ENCODE measurements at regions of chr7 and their contacts with region 1.

Region 1: DNA sequence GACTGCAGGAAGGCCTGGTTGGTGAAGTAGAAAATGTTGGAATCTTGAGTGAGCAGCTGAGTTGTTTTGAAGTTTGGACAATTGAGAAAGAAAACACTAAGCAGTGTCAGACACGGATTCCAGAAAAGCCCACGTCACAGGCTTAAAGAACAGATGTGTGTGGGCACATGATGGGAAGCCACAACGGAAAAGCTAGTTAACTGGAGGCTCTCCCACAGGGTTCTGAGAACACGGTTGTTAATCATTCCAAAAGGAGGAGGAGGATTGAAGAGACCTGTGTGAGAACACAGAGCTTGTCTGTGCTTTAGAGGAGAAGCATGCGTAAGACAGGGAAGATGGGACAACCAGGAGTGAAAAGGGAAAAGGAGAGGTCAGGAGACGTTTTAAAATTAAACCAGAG is 42.6 kb downstream of the SHH start:
- DNase-seq: no peak
- ATAC-seq: no peak
- H3K4me3 ChIP-seq: no peak overlapping the region
- H3K4me3 Mint-ChIP-seq: no peak overlapping the region
- H3K27ac ChIP-seq: no peak overlapping the region
- H3K27ac Mint-ChIP-seq: no peak overlapping the region
- H3K4me1 ChIP-seq: peaks cover 0 to 2% of the 10 kb centered on the region in 2 donors
- H3K4me1 Mint-ChIP-seq: peaks cover 3% of the 10 kb centered on the region
- H3K27me3 ChIP-seq: no peaks in the 10 kb centered on the region
- H3K27me3 Mint-ChIP-seq: no peaks in the 10 kb centered on the region
- CTCF ChIP-seq: no peak

Region 2: GRCh38 chr7:155263332-155264143 is 506.2 kb before region 1 on chr7:
- CTCF ChIA-PET with region 1: no interaction called
- POLR2A ChIA-PET with region 1: no interaction called
- intact Hi-C with region 1: no loop called
- DNase-seq: no peak
- ATAC-seq: no peak
- H3K4me3 ChIP-seq: no peak overlapping the region
- H3K4me3 Mint-ChIP-seq: no peak overlapping the region
- H3K27ac ChIP-seq: no peak overlapping the region
- H3K27ac Mint-ChIP-seq: no peak overlapping the region
- H3K4me1 ChIP-seq: no peaks in the 10 kb centered on the region
- H3K4me1 Mint-ChIP-seq: no peaks in the 10 kb centered on the region
- H3K27me3 ChIP-seq: no peaks in the 10 kb centered on the region
- H3K27me3 Mint-ChIP-seq: peaks cover 11% of the 10 kb centered on the region
- CTCF ChIP-seq: no peak

Region 3: DNA sequence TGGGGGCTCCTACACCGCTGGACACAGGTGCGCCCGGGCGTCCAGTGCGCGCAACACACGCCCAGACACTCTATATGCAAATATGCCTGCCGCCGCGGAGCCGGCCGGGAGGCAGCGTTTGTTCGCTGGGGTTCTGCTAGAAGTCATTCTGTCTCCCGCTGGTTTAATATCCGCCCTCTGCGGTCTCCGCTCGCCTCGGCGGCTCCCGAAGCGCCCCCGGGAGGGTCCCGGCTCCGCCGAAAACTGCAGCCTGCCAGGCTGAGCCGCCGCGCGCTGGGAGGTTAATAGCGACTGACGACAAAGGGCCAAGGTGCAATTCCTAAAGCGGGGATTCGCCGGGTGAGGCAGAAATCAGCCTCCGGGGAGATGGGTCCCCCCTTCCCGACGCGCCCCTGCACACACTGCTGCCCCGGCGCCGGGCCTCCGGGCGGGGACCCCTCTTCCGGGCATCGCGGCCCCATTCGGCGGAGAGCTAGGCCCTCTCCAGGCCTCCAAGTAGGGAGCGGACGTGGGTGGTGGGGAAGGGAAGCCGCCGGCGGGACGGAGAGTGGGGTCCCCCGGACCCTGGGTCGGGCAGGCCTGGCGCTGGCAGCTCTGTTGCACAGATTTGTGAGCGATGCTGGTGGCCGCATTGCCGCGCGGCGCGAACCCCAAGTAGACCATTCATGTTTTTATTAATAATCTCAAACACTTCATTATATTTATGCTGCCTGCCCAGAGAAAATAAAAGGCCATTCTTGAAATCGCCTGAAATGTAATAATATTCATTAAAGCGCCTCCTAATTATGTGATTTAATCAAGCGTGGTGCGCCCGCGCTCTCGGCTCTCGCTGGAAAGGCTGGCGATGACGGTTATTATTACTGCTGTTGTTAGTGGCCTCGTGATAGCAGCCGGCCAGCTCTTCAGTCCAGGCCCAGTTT is 302.6 kb before region 1 on chr7:
- CTCF ChIA-PET with region 1: no interaction called
- POLR2A ChIA-PET with region 1: no interaction called
- intact Hi-C with region 1: loop called (anchors 5 kb)
- DNase-seq: peak; percentile 59
- ATAC-seq: no peak
- H3K4me3 ChIP-seq: peak overlapping the region in 3 of 5 experiments; percentile 9 to 45 (median 30)
- H3K4me3 Mint-ChIP-seq: peak overlapping the region; percentile 64
- H3K27ac ChIP-seq: no peak overlapping the region
- H3K27ac Mint-ChIP-seq: no peak overlapping the region
- H3K4me1 ChIP-seq: peaks cover 39 to 59% of the 10 kb centered on the region in 2 donors
- H3K4me1 Mint-ChIP-seq: peaks cover 21% of the 10 kb centered on the region
- H3K27me3 ChIP-seq: peaks cover 0 to 96% (median 85%) of the 10 kb centered on the region in 4 experiments
- H3K27me3 Mint-ChIP-seq: peaks cover 78% of the 10 kb centered on the region
- CTCF ChIP-seq: no peak

Region 4: DNA sequence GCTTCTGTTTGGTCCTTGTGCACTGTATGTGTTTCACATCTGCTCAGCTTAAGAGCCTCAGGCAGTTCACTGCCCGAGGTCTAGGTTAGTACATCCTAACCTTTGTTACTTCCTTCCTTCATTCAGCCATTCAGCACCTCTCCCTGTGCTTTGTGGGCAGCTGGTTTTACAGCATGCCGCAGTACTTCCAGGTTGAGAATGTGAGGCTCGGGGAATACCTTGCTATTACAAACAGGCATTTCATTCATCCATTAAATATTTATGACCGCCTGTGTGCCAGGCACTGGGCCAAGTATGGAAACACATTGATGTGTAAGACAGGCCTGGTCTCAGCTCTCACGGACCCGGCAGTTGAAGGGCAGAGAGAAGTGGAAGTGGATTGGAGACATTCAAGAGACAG is 39.9 kb before region 1 on chr7:
- CTCF ChIA-PET with region 1: interaction called, 11 read pairs
- POLR2A ChIA-PET with region 1: no interaction called
- intact Hi-C with region 1: no loop called
- DNase-seq: no peak
- ATAC-seq: no peak
- H3K4me3 ChIP-seq: no peak overlapping the region
- H3K4me3 Mint-ChIP-seq: no peak overlapping the region
- H3K27ac ChIP-seq: peak overlapping the region in 1 of 2 donors; percentile 76
- H3K27ac Mint-ChIP-seq: peak overlapping the region; percentile 43
- H3K4me1 ChIP-seq: peaks cover 41 to 53% of the 10 kb centered on the region in 2 donors
- H3K4me1 Mint-ChIP-seq: peaks cover 80% of the 10 kb centered on the region
- H3K27me3 ChIP-seq: no peaks in the 10 kb centered on the region
- H3K27me3 Mint-ChIP-seq: no peaks in the 10 kb centered on the region
- CTCF ChIP-seq: no peak

Region 5: DNA sequence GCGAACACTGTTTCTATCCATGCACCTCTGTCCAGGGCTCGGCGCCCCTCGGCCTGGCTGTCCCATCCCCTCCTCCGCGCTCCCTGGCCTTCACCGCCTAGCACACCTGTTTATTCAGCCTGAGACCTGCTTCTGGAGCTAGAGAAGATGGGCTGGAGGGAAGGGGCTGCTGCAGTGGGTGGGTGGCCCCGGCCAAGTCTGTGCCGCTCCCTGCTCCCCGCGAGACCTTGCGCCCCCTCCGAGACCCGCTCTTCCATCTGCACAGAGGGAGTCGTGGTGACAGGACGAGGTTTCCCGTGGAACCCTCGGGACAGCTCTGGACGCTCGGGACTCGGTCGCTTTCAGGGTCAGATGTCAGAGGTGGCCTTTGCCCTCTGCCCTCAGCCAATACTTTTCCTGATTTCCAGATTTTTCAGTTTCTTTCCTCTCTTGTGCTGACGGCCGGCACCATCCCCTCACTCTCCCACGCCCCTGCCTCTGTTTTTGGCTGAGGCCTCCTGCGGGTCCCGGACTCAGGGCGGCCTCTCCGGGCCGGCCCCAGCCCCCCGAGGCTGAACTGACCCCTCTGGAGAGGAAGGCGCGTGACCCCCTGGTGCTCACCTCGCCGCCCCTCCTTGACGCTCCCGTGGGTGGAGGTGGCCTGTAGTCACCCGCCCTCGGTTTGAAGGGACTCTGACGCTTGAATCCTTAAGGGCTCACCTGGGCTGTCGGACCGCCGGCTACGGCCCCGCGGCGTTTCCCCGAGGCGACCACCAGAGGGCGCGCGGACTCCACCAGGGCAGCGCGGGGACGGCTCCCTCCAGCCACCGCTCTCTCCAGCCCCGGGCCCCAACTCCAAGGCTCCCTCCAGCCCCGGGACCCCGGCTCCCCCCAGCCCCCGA is 26.9 kb after region 1 on chr7:
- CTCF ChIA-PET with region 1: no interaction called
- POLR2A ChIA-PET with region 1: no interaction called
- intact Hi-C with region 1: no loop called
- DNase-seq: peak; percentile 72
- ATAC-seq: peak; percentile 91
- H3K4me3 ChIP-seq: no peak overlapping the region
- H3K4me3 Mint-ChIP-seq: no peak overlapping the region
- H3K27ac ChIP-seq: no peak overlapping the region
- H3K27ac Mint-ChIP-seq: no peak overlapping the region
- H3K4me1 ChIP-seq: peaks cover 18% of the 10 kb centered on the region in 2 donors
- H3K4me1 Mint-ChIP-seq: peaks cover 10% of the 10 kb centered on the region
- H3K27me3 ChIP-seq: peaks cover 0 to 49% (median 15%) of the 10 kb centered on the region in 4 experiments
- H3K27me3 Mint-ChIP-seq: peaks cover 40% of the 10 kb centered on the region
- CTCF ChIP-seq: peak; percentile 88